Pancreas (tissue), 10 donors: ENCODE measurements at regions of chr2 and their contacts with region 1.

Region 1: DNA sequence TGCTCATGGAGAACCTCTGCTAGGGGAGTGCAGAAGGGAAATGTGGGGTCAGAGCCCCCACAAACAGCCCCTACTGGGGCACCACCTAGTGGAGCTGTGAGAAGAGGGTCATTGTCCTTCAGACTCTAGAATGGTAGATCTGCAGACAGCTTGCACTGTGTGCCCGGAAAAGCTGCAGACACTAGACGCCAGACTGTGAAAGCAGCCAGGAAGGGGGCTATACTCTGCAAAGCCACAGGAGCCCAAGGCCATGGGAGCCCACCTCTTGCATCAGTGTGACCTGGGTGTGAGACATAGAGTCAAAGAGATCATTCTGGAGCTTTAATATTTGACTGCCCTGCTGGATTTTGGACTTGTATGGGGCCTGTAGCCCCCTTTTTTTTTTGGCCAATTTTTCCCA is 60.9 kb downstream of the RPE start:
- DNase-seq: no peak
- ATAC-seq: no peak
- H3K4me3 ChIP-seq: no peak overlapping the region
- H3K27ac ChIP-seq: no peak overlapping the region
- H3K4me1 ChIP-seq: no peaks in the 10 kb centered on the region
- H3K27me3 ChIP-seq: no peaks in the 10 kb centered on the region
- CTCF ChIP-seq: no peak

Region 2: GRCh38 chr2:210203157-210203947 is 140.0 kb after region 1 on chr2:
- intact Hi-C with region 1: loop called in 1 of 3 experiments (anchors 10 kb)
- DNase-seq: no peak
- ATAC-seq: no peak
- H3K4me3 ChIP-seq: no peak overlapping the region
- H3K27ac ChIP-seq: peak overlapping the region in 1 of 4 donors; percentile 13
- H3K4me1 ChIP-seq: no peaks in the 10 kb centered on the region
- H3K27me3 ChIP-seq: no peaks in the 10 kb centered on the region
- CTCF ChIP-seq: no peak

Region 3: GRCh38 chr2:210302326-210302725 is 239.0 kb after region 1 on chr2:
- intact Hi-C with region 1: no loop called
- DNase-seq: no peak
- ATAC-seq: no peak
- H3K4me3 ChIP-seq: no peak overlapping the region
- H3K27ac ChIP-seq: no peak overlapping the region
- H3K4me1 ChIP-seq: no peaks in the 10 kb centered on the region
- H3K27me3 ChIP-seq: no peaks in the 10 kb centered on the region
- CTCF ChIP-seq: no peak

Region 4: GRCh38 chr2:210432633-210433032 is 369.3 kb after region 1 on chr2:
- intact Hi-C with region 1: no loop called
- DNase-seq: no peak
- ATAC-seq: no peak
- H3K4me3 ChIP-seq: no peak overlapping the region
- H3K27ac ChIP-seq: no peak overlapping the region
- H3K4me1 ChIP-seq: no peaks in the 10 kb centered on the region
- H3K27me3 ChIP-seq: no peaks in the 10 kb centered on the region
- CTCF ChIP-seq: no peak